ENCODE measurements at regions of chr1 and their contacts with region 1.

Region 1: GRCh38 chr1:152479792-152480595 is 30.6 kb upstream of the LCE5A start:
- DNase-seq: peak; percentile 81
- ATAC-seq: peak; percentile 81
- H3K4me3 Mint-ChIP-seq: no peak overlapping the region
- H3K27ac Mint-ChIP-seq: no peak overlapping the region
- H3K4me1 Mint-ChIP-seq: peaks cover 7% of the 10 kb centered on the region
- H3K27me3 Mint-ChIP-seq: no peaks in the 10 kb centered on the region
- CTCF ChIP-seq: peak; percentile 49

Region 2: GRCh38 chr1:151961833-151962232 is 518.2 kb before region 1 on chr1:
- CTCF ChIA-PET with region 1: no interaction called
- POLR2A ChIA-PET with region 1: no interaction called
- intact Hi-C with region 1: no loop called
- DNase-seq: no peak
- ATAC-seq: no peak
- H3K4me3 Mint-ChIP-seq: no peak overlapping the region
- H3K27ac Mint-ChIP-seq: no peak overlapping the region
- H3K4me1 Mint-ChIP-seq: no peaks in the 10 kb centered on the region
- H3K27me3 Mint-ChIP-seq: peaks cover 5% of the 10 kb centered on the region
- CTCF ChIP-seq: no peak

Region 3: GRCh38 chr1:152495066-152495675 is 15.2 kb after region 1 on chr1:
- CTCF ChIA-PET with region 1: interaction called, 13 read pairs
- POLR2A ChIA-PET with region 1: no interaction called
- intact Hi-C with region 1: no loop called
- DNase-seq: peak; percentile 33
- ATAC-seq: no peak
- H3K4me3 Mint-ChIP-seq: no peak overlapping the region
- H3K27ac Mint-ChIP-seq: no peak overlapping the region
- H3K4me1 Mint-ChIP-seq: no peaks in the 10 kb centered on the region
- H3K27me3 Mint-ChIP-seq: peaks cover 7% of the 10 kb centered on the region
- CTCF ChIP-seq: no peak

Measured in activated CD8-positive, alpha-beta T cell treated with anti-CD3 and anti-CD28 coated beads for 36 hours (primary cell).